Activated T-helper 1 cell treated with anti-CD3 and anti-CD28 coated beads, Interleukin-12 subunit alpha, Interleukin-12 subunit beta, Interleukin-2, Interleukin-4 antibody, amounts not matched to agents 30 ng/mL and 10 ng/mL and 1 ng/mL, durations not matched to agents 14 hours and 24 hours and 36 hours (primary cell): ENCODE measurements at regions of chr17 and their contacts with region 1.

Region 1: GRCh38 chr17:63827002-63827771 is at the starts of genes FTSJ3 and PSMC5:
- DNase-seq: peak; percentile 94
- H3K4me3 Mint-ChIP-seq: peak within 1 kb of the TSS; percentile 96
- H3K27ac Mint-ChIP-seq: peak within 1 kb of the TSS; percentile 98
- H3K4me1 Mint-ChIP-seq: peaks cover 71% of the 10 kb centered on the region
- H3K27me3 Mint-ChIP-seq: no peaks in the 10 kb centered on the region
- total RNA-seq, gene FTSJ3: 95.6 and 100 TPM in 2 replicates
- total RNA-seq, gene PSMC5: 185 and 195 TPM in 2 replicates

Region 2: GRCh38 chr17:61927200-61928165 is 1899.7 kb before region 1 on chr17 and contains the start of gene INTS2:
- intact Hi-C with region 1: loop called (anchors 2 kb)
- DNase-seq: peak; percentile 90
- H3K4me3 Mint-ChIP-seq: peak within 1 kb of the TSS; percentile 92
- H3K27ac Mint-ChIP-seq: peak within 1 kb of the TSS; percentile 93
- H3K4me1 Mint-ChIP-seq: peaks cover 22% of the 10 kb centered on the region
- H3K27me3 Mint-ChIP-seq: no peaks in the 10 kb centered on the region
- total RNA-seq, gene INTS2: 25.4 and 25.6 TPM in 2 replicates

Region 3: GRCh38 chr17:63697341-63698286 is 129.6 kb before region 1 on chr17:
- intact Hi-C with region 1: loop called (anchors 1 kb)
- DNase-seq: peak; percentile 76
- H3K4me3 Mint-ChIP-seq: peak overlapping the region; percentile 96
- H3K27ac Mint-ChIP-seq: peak overlapping the region; percentile 96
- H3K4me1 Mint-ChIP-seq: peaks cover 53% of the 10 kb centered on the region
- H3K27me3 Mint-ChIP-seq: no peaks in the 10 kb centered on the region

Region 4: DNA sequence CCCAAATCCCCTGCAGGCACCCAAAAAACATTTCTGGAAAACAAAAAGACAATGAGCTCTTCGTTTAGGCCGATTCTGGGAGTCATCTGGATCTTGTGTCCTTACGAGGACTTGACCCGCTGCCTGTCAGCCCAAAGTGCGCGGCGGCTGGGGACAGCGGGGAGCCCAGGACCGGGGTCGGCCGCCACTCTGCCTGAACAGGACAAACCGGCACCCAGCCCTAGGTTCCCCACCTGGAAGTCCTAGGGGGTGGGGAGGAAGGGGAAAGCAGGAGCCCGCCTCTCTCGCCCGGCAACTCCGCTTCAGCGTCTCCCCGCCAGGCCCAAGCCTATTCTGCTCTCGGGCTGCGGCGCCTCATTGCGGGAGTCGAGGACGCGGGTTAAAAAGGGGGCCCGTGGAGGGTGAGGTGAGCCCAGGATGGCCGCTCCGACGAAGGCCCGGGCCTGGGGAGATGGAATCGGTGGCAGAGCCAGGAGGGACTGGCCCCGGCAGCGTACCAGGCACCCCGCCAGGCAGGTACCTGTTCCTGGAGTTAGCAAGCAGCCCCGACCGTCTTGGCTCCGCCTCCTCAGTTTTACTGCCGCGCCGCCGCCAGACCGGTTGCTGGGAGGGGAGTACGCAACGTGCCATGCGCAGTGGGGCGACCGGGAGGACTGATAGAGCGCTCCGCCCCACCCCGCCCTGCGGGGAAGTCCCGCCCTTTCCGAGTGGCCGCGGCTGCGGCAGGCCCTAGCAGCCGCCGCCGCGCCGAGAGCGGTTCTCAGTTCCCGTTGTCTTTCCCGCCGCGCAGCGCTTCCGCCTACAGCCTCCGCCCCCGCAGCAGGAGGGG is 85.8 kb before region 1 on chr17 and contains the start of gene STRADA:
- intact Hi-C with region 1: loop called (anchors 1 kb)
- DNase-seq: peak; percentile 99
- H3K4me3 Mint-ChIP-seq: peak within 1 kb of the TSS; percentile 98
- H3K27ac Mint-ChIP-seq: peak within 1 kb of the TSS; percentile 97
- H3K4me1 Mint-ChIP-seq: peaks cover 25% of the 10 kb centered on the region
- H3K27me3 Mint-ChIP-seq: no peaks in the 10 kb centered on the region
- total RNA-seq, gene STRADA: 59.1 and 59.4 TPM in 2 replicates

Region 5: DNA sequence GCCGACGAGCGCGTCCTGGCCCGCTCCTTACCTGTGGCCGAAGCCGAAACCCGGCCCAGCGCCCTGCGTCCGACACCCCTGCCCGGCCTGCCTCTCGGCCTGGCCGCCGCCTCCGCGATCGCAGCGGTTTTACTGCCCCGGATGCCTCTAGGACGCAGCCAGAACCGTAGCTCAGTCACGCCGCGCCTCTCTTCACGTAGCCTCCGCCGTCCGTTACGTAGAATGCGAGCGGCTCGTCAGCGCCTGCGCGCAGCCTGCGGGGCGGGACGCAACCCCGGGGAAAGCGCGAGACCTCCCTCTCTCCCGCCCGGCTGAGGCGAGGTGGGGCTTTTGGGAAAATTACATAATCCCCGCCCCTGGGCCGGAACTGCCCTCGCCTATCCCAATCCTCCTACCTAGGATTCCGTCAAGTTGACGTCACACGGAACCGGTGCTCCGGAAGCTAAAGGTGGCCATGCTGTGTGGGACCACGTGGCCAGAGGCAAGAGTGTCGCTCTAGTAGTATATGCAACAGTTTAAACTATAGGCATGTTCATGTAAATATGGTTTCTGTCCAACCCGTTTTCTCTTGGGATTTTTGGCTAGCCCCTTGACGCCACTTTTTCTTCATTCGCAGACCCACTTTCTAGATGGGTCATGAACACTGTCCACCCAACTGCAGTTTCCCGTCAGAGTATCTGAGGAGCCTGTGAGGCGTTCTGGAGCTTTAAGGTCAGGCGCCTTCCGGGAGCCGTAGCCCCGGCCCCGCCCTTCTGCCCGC is 53.6 kb before region 1 on chr17 and contains the start of gene CCDC47:
- intact Hi-C with region 1: loop called (anchors 1 kb)
- DNase-seq: peak; percentile 99
- H3K4me3 Mint-ChIP-seq: peak within 1 kb of the TSS; percentile 96
- H3K27ac Mint-ChIP-seq: peak within 1 kb of the TSS; percentile 100
- H3K4me1 Mint-ChIP-seq: peaks cover 63% of the 10 kb centered on the region
- H3K27me3 Mint-ChIP-seq: no peaks in the 10 kb centered on the region
- total RNA-seq, gene CCDC47: 74.8 and 79.2 TPM in 2 replicates